CD14-positive monocyte (primary cell): ENCODE measurements at regions of chr9 and their contacts with region 1.

Region 1: DNA sequence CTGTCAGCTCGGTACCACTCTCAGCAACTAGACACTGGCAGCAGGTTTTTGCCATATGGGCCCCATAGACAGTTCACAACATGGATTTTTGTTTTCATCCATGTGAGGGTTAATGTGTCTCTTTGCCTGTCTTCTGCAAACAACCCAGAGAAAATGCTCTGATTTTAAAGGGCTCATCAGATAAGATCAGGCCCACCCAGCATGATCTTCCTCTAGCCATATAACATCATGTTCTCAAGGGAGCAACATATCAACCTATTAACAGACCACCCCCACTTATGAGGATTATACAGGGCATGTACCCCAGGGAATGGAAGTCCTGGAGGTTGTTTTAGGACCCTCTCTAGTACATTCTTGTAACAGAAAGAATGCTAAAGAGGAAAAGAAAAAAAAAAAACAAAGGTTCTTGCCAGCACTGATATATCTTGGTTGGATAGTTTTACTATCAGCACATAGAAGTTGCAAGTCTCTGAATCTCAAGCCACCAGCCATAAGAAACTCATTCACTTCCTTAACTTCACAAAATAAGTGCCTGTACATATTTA is 1015.1 kb downstream of the TLE4 start:
- DNase-seq: no peak
- H3K4me3 ChIP-seq: no peak overlapping the region
- H3K4me3 Mint-ChIP-seq: no peak overlapping the region
- H3K27ac ChIP-seq: no peak overlapping the region
- H3K27ac Mint-ChIP-seq: no peak overlapping the region
- H3K4me1 ChIP-seq: no peaks in the 10 kb centered on the region
- H3K4me1 Mint-ChIP-seq: no peaks in the 10 kb centered on the region
- H3K27me3 ChIP-seq: no peaks in the 10 kb centered on the region
- H3K27me3 Mint-ChIP-seq: no peaks in the 10 kb centered on the region
- CTCF ChIP-seq: no peak

Region 2: GRCh38 chr9:80467632-80468031 is 119.2 kb before region 1 on chr9:
- intact Hi-C with region 1: no loop called
- DNase-seq: no peak
- H3K4me3 ChIP-seq: no peak overlapping the region
- H3K4me3 Mint-ChIP-seq: no peak overlapping the region
- H3K27ac ChIP-seq: no peak overlapping the region
- H3K27ac Mint-ChIP-seq: no peak overlapping the region
- H3K4me1 ChIP-seq: no peaks in the 10 kb centered on the region
- H3K4me1 Mint-ChIP-seq: no peaks in the 10 kb centered on the region
- H3K27me3 ChIP-seq: no peaks in the 10 kb centered on the region
- H3K27me3 Mint-ChIP-seq: no peaks in the 10 kb centered on the region
- CTCF ChIP-seq: no peak

Region 3: DNA sequence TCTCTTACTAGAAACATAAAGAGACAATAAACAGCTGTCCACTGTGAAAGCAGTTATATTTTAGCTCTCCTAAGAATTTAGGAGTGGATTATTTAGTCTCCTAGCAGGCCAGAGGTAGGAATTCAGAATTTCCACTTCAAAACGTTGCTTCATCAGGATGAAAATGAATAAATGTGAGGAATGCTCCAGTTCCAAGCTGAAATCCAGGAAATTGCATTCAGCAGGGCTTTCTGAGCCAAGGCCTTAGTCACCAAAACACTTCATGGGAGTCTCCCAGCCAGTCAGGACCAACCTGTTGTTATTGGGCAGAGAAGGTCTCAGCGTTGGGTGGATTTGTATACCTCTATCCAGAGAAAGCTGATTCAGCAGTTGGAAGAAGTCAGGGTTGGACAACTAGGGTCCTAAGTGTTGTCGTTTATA is 62.2 kb after region 1 on chr9:
- intact Hi-C with region 1: loop called in 1 of 2 experiments (anchors 10 kb)
- DNase-seq: no peak
- H3K4me3 ChIP-seq: no peak overlapping the region
- H3K4me3 Mint-ChIP-seq: no peak overlapping the region
- H3K27ac ChIP-seq: no peak overlapping the region
- H3K27ac Mint-ChIP-seq: no peak overlapping the region
- H3K4me1 ChIP-seq: no peaks in the 10 kb centered on the region
- H3K4me1 Mint-ChIP-seq: no peaks in the 10 kb centered on the region
- H3K27me3 ChIP-seq: no peaks in the 10 kb centered on the region
- H3K27me3 Mint-ChIP-seq: no peaks in the 10 kb centered on the region
- CTCF ChIP-seq: no peak